Thyroid gland (tissue), 4 donors: ENCODE measurements at regions of chr17 and their contacts with region 1.

Region 1: GRCh38 chr17:7045909-7046724 is 2.2 kb upstream of the SLC16A11 start:
- DNase-seq: peak; percentile 98
- H3K4me3 ChIP-seq: peak overlapping the region in 1 of 3 donors; percentile 20
- H3K27ac ChIP-seq: peak overlapping the region; percentile 76 to 96 (median 90)
- H3K4me1 ChIP-seq: peaks cover 22 to 40% of the 10 kb centered on the region in 2 donors
- H3K27me3 ChIP-seq: no peaks in the 10 kb centered on the region
- CTCF ChIP-seq: peak; percentile 25 to 95 (median 76)
- POLR2A ChIP-seq: peak in 1 of 2 donors; percentile 78

Region 2: GRCh38 chr17:7136266-7136877 is 90.3 kb after region 1 on chr17:
- intact Hi-C with region 1: loop called (anchors 2 kb)
- DNase-seq: peak; percentile 74 to 77
- H3K4me3 ChIP-seq: no peak overlapping the region
- H3K27ac ChIP-seq: no peak overlapping the region
- H3K4me1 ChIP-seq: peaks cover 9 to 20% of the 10 kb centered on the region in 2 donors
- H3K27me3 ChIP-seq: no peaks in the 10 kb centered on the region
- CTCF ChIP-seq: peak; percentile 77 to 93 (median 88)
- POLR2A ChIP-seq: no peak

Region 3: DNA sequence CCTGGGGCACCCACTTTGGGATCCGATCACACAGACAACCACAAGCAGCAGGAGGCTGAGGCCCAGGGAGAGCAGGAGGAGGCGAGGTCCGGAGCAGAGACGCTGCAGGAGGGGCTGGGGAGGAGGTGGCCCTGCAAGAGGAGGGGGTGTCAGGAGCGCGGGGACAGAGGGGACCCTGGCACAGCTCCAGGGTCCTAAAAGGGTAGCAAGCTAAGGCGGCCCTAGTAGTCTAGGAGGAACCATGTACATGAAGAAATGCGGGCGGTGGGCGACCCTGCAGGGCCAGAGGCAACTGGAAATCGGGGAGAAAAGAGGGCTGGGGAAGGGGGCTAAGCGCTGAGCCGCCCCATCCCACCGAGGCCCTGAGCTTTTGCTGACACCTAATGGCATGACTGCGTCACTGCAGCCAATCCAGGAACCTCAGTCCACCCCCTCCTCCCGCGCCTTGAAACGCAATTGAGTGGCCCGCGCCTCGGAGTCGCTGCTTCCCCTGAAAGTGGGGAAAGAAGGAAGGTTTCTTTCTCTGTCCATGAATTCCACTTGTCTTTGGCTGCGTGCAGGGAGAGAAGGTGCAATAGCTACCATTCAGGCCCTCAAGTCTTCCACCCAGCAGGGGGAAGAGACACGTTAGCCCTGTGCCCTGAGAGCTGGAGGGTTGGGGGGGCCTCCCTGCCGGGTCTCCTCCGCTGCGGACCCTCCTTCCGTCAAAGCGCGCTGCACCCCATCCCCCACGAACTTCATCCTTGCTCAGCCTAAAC is 131.3 kb after region 1 on chr17:
- intact Hi-C with region 1: loop called (anchors 5 kb)
- DNase-seq: peak; percentile 75 to 77
- H3K4me3 ChIP-seq: peak overlapping the region in 2 of 3 donors; percentile 24 to 29
- H3K27ac ChIP-seq: peak overlapping the region in 2 of 3 donors; percentile 21 to 45
- H3K4me1 ChIP-seq: peaks cover 19 to 30% of the 10 kb centered on the region in 2 donors
- H3K27me3 ChIP-seq: no peaks in the 10 kb centered on the region
- CTCF ChIP-seq: peak; percentile 75 to 97 (median 88)
- POLR2A ChIP-seq: no peak

Region 4: DNA sequence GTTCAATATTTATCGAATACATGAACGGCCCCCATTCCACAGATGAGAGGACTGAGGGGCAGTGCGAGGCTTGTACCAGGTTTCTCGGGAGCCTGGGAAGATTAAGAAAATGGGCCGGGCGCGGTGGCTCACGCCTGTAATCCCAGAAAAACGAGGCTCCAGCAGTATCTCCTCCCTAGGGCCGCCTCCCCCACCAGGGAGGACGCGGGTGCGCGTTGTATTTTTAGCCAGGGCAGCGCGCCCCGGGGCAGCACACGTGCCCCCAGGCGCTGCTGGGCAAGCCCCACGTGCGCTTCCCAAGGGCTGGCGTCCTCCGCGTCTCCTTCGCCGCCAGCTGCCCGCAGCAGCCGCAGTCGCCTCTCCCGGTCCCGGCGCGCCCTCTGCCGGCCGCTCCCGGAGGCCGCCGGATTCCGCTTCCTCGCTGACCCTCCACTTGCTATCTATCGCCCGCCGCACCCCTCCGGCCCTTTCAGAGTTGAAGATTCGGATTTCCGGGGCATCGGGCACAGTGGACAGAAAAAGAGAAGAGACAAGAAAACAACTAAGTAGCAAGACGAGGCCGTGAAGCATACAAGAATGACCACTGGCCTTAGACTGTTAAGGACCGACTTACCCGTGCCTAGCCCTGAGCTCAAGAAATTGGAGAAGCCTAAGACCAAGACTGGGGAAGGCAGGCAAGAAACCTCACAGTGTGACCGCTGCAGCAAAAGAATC is 250.2 kb after region 1 on chr17:
- intact Hi-C with region 1: loop called (anchors 5 kb)
- DNase-seq: peak; percentile 85
- H3K4me3 ChIP-seq: no peak overlapping the region
- H3K27ac ChIP-seq: peak overlapping the region in 1 of 3 donors; percentile 12
- H3K4me1 ChIP-seq: peaks cover 8 to 36% of the 10 kb centered on the region in 2 donors
- H3K27me3 ChIP-seq: no peaks in the 10 kb centered on the region
- CTCF ChIP-seq: peak; percentile 80 to 97 (median 93)
- POLR2A ChIP-seq: no peak